ENCODE measurements at regions of chr6 and their contacts with region 1.

Region 1: DNA sequence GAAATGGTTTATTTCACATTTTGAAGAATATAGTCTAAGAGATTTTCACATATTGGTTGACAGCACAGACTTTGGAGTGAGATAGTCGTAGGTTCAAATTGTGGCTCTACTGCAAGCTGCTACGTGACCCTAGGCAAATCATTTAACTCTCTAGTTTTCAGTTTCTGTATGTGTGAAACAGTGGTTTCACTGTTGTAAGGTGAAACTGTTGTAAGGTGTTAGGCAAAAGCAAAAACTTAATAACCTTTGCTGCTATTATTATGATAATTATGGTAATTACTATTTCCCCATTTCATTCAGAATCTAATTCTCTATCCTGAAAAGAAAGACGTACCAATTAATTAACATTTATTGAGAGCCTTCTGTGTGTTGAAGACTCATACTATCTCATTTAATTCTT is 144.2 kb downstream of the REV3L start:
- DNase-seq: no peak
- ATAC-seq: no peak

Region 2: GRCh38 chr6:112144145-112144926 is 805.5 kb after region 1 on chr6:
- intact Hi-C with region 1: loop called (anchors 5 kb)
- DNase-seq: no peak
- ATAC-seq: no peak